ENCODE measurements at regions of chr7 and their contacts with region 1.

Region 1: DNA sequence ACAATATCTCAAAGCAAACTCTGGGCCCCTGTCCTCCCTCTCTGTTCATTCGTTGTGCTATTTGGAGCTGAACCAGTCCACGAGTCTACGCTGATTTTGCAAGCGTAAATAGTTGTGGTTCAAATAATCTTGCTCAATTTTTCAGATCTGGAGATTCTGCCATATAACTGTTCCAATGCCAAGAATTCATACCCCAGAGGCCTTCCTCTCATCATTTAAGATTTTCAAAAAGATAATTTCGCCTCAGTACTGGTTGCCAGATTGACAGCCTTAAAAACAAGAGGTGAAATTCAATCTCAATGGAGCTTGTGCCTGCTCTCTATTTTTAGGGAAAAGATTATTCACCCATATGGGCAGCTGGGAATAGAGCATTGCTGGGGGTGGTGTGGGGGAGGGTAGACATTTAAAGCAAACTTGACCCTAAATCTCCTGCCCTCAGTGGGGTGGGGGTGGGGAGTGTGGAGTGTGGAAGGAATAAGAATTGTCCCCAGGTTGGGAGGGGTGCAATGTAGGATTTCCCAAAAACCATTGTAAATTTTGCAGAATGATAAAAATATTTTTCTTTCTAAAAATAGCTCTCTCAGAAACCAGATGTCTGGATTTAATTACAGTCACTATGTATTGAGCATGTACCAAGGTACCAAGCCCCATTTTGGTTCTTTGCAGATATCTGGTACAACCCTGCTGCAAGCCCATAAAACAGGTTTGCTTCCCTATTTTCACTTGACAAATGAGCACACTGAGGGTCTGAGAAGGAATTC is 104.7 kb upstream of the EEPD1 start:
- DNase-seq: peak; percentile 34
- H3K4me3 ChIP-seq: no peak overlapping the region
- H3K27ac ChIP-seq: no peak overlapping the region
- H3K4me1 ChIP-seq: peaks cover 17% of the 10 kb centered on the region
- H3K27me3 ChIP-seq: no peaks in the 10 kb centered on the region
- CTCF ChIP-seq: no peak

Region 2: GRCh38 chr7:36029853-36030515 is 18.3 kb before region 1 on chr7:
- CTCF ChIA-PET with region 1: interaction called, 10 read pairs
- POLR2A ChIA-PET with region 1: no interaction called
- intact Hi-C with region 1: no loop called
- DNase-seq: no peak
- H3K4me3 ChIP-seq: no peak overlapping the region
- H3K27ac ChIP-seq: no peak overlapping the region
- H3K4me1 ChIP-seq: no peaks in the 10 kb centered on the region
- H3K27me3 ChIP-seq: peaks cover 5% of the 10 kb centered on the region
- CTCF ChIP-seq: no peak

Measured in A673 (cell line).